Gastrocnemius medialis (tissue), 4 donors: ENCODE measurements at regions of chr9 and their contacts with region 1.

Region 1: DNA sequence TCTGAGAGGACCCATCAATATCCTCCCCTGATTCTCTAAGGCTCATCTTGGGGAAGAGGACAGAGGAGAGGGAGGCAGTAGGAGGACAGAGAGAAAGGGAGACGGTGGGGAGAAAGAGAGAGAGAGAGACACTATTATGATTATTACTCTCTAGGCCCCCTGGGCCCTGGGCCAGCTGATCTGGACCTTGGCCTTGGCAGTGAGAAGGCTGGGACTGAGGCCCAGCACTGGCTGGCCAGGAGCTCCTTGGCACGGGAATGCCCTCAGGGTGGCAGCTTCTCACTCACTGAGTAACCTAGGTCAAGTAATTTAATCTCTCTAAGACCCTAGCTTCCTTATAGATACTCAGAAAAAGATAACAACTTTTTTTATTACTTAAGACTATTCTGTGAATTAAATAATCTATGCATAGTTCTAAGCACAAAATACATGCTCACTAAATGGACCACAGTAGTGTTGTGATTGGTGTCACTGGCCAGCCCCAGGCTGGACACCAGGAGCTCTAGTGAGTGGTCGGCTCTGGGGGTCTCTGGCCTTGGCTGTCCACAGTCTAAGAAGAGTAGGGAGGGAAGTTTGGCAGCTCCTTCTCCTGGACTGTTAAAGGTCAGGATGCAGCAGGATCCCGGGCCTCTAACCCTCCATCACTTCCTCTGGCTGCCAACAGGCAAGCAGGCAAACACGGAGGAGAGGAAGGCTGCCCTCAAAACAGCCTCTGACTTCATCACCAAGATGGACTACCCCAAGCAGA is 50.0 kb downstream of the GSN start:
- DNase-seq: no peak
- ATAC-seq: no peak
- H3K4me3 ChIP-seq: no peak overlapping the region
- H3K27ac ChIP-seq: peak overlapping the region; percentile 62 to 91 (median 88)
- H3K4me1 ChIP-seq: peaks cover 0 to 22% of the 10 kb centered on the region in 2 donors
- H3K27me3 ChIP-seq: no peaks in the 10 kb centered on the region
- CTCF ChIP-seq: no peak
- POLR2A ChIP-seq: no peak

Region 2: DNA sequence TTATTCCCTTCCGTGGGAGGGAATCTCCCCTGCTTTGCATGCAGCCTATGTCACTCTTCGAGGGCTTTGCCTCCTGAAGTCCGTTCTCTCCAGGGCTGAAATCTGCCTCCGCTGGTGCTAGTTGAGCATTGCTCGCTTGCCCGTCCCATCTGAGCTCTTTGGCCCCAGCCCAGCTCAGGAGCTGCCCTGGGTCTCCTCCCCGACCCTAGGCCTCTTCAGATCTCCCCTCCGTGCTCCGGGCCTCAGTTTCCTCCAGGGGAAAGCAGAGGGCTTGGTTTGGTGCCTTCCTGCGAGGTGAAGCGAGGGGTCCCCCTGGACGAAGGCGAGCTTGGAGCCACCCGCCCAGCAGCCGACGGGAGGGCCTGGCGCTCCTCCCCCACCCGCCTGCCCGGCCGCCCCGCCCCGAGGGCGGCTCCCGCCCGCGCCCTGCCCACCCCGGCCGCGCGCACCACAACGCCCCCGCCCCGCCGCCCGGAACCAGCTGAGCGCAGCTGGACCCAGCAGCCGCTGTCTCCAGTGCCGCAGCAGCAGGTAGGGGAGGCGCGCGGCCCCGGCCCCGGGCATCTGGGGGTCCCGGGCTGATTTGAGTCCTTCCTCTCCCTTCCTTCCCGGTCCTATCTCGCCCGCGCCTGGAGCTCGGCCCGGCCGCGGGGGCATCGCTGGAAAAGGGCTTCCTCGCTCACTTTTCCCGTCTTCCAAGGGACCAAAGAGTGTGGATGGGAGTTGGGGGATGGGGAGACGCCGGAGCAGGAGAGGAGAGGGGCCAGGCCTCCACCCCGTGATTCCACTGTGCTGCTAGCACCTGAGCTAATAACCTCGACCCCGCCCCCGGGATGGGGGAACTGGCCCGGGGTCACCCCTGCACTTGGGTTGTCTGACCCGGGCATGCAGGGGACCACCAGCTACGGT is 50.0 kb before region 1 on chr9 and contains the start of gene GSN:
- in situ Hi-C with region 1: no loop called
- intact Hi-C with region 1: no loop called
- DNase-seq: peak; percentile 58 to 62
- ATAC-seq: peak; percentile 61 to 78
- H3K4me3 ChIP-seq: peak within 1 kb of the TSS; percentile 75 to 95 (median 84)
- H3K27ac ChIP-seq: peak within 1 kb of the TSS; percentile 67 to 81 (median 73)
- H3K4me1 ChIP-seq: peaks cover 38 to 53% of the 10 kb centered on the region in 2 donors
- H3K27me3 ChIP-seq: no peaks in the 10 kb centered on the region
- CTCF ChIP-seq: no peak
- POLR2A ChIP-seq: peak; percentile 78 to 80
- total RNA-seq, gene GSN: 487 to 785 (median 662) TPM

Region 3: GRCh38 chr9:121399883-121400607 is 82.1 kb after region 1 on chr9:
- in situ Hi-C with region 1: loop called in 3 of 4 experiments (anchors 5 kb)
- intact Hi-C with region 1: loop called (anchors 1 kb)
- DNase-seq: no peak
- ATAC-seq: peak; percentile 80 to 87
- H3K4me3 ChIP-seq: no peak overlapping the region
- H3K27ac ChIP-seq: no peak overlapping the region
- H3K4me1 ChIP-seq: no peaks in the 10 kb centered on the region
- H3K27me3 ChIP-seq: no peaks in the 10 kb centered on the region
- CTCF ChIP-seq: peak; percentile 69 to 91 (median 77)
- POLR2A ChIP-seq: no peak